ENCODE measurements at regions of chr11 and their contacts with region 1.

Region 1: GRCh38 chr11:65117216-65118096 is at the start of gene ZNHIT2:
- DNase-seq: peak; percentile 100
- H3K4me3 Mint-ChIP-seq: peak within 1 kb of the TSS; percentile 87
- H3K27ac Mint-ChIP-seq: peak within 1 kb of the TSS; percentile 96
- H3K4me1 Mint-ChIP-seq: peaks cover 64% of the 10 kb centered on the region
- H3K27me3 Mint-ChIP-seq: no peaks in the 10 kb centered on the region
- total RNA-seq, gene ZNHIT2: 8.6 to 9.9 TPM

Region 2: GRCh38 chr11:65095974-65096806 is 21.3 kb before region 1 on chr11 and contains the start of gene VPS51:
- CTCF ChIA-PET with region 1: interaction called, 85 read pairs
- POLR2A ChIA-PET with region 1: no interaction called
- DNase-seq: peak; percentile 90
- H3K4me3 Mint-ChIP-seq: peak within 1 kb of the TSS; percentile 93
- H3K27ac Mint-ChIP-seq: peak within 1 kb of the TSS; percentile 98
- H3K4me1 Mint-ChIP-seq: peaks cover 25% of the 10 kb centered on the region
- H3K27me3 Mint-ChIP-seq: no peaks in the 10 kb centered on the region
- total RNA-seq, gene VPS51: 146 to 148 TPM

Region 3: DNA sequence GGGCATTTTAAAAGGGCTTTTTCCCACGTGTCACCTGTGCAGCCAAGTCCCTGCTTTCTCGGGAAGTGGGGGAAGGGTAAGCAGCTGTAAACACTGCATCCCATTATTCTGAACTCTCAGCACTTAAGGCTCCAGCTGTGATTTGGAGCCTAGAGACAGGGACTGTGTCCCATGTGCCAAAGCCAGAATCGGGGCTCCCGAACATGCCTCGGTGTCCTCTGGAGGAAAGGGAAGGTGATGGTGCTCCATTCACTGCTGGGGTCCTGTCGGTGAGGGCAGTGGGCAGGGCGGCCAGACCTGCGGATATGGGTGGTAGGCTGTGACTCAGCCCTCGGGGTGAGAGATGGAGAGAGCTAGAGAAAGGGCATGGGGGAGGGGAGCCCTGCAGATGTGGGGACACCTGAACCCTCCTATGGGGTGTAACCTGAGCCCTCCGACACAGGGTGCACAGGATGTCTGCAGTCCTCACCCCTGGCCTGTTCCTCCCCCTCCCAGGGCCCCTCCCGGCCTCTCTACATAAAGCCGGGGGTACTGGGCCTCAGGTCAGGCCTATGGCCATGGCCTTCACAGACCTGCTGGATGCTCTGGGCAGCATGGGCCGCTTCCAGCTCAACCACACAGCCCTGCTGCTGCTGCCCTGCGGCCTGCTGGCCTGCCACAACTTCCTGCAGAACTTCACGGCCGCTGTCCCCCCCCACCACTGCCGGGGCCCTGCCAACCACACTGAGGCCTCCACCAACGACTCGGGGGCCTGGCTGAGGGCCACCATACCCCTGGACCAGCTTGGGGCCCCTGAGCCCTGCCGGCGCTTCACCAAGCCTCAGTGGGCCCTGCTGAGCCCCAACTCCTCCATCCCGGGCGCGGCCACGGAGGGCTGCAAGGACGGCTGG is 96.1 kb after region 1 on chr11:
- CTCF ChIA-PET with region 1: no interaction called
- POLR2A ChIA-PET with region 1: no interaction called
- DNase-seq: no peak
- H3K4me3 Mint-ChIP-seq: no peak overlapping the region
- H3K27ac Mint-ChIP-seq: peak overlapping the region; percentile 14
- H3K4me1 Mint-ChIP-seq: peaks cover 19% of the 10 kb centered on the region
- H3K27me3 Mint-ChIP-seq: no peaks in the 10 kb centered on the region

Region 4: DNA sequence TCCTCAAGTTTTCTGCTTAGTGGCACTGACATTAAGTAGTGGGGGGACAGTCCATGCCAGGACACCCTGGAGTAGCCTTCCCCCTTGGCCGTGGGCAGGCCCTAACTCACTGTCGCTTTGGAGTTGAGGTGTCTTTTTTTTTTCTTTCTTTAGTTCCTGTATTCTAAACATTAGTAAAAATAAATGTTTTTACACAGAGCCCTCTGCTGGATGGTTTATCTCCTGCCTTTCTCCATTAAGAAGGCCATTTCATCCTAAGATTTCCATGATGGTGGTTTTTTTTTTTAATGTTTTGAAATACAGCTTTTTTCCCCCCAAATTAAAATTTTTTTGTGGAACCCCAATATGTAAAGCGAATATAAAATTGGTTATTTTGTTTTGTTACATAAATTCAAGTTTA is 235.3 kb after region 1 on chr11:
- CTCF ChIA-PET with region 1: no interaction called
- POLR2A ChIA-PET with region 1: no interaction called
- DNase-seq: no peak
- H3K4me3 Mint-ChIP-seq: no peak overlapping the region
- H3K27ac Mint-ChIP-seq: no peak overlapping the region
- H3K4me1 Mint-ChIP-seq: peaks cover 16% of the 10 kb centered on the region
- H3K27me3 Mint-ChIP-seq: peaks cover 4% of the 10 kb centered on the region